Activated CD4-positive, alpha-beta memory T cell treated with anti-CD3 and anti-CD28 coated beads, Interleukin-2, amount 10 ng/mL, durations not matched to agents 7 days and 5 days (primary cell): ENCODE measurements at regions of chr10 and their contacts with region 1.

Region 1: GRCh38 chr10:101569838-101570766 is 18.0 kb downstream of the POLL start:
- DNase-seq: peak; percentile 84
- H3K4me3 Mint-ChIP-seq: peak overlapping the region; percentile 73
- H3K27ac Mint-ChIP-seq: no peak overlapping the region
- H3K4me1 Mint-ChIP-seq: peaks cover 18% of the 10 kb centered on the region
- H3K27me3 Mint-ChIP-seq: peaks cover 39% of the 10 kb centered on the region

Region 2: GRCh38 chr10:101272229-101272868 is 297.8 kb before region 1 on chr10:
- CTCF ChIA-PET with region 1: interaction called, 13 read pairs
- POLR2A ChIA-PET with region 1: no interaction called
- DNase-seq: peak; percentile 66
- H3K4me3 Mint-ChIP-seq: no peak overlapping the region
- H3K27ac Mint-ChIP-seq: no peak overlapping the region
- H3K4me1 Mint-ChIP-seq: no peaks in the 10 kb centered on the region
- H3K27me3 Mint-ChIP-seq: peaks cover 24% of the 10 kb centered on the region

Region 3: GRCh38 chr10:101525848-101526247 is 44.3 kb before region 1 on chr10:
- CTCF ChIA-PET with region 1: no interaction called
- POLR2A ChIA-PET with region 1: no interaction called
- DNase-seq: no peak
- H3K4me3 Mint-ChIP-seq: no peak overlapping the region
- H3K27ac Mint-ChIP-seq: no peak overlapping the region
- H3K4me1 Mint-ChIP-seq: no peaks in the 10 kb centered on the region
- H3K27me3 Mint-ChIP-seq: no peaks in the 10 kb centered on the region

Region 4: DNA sequence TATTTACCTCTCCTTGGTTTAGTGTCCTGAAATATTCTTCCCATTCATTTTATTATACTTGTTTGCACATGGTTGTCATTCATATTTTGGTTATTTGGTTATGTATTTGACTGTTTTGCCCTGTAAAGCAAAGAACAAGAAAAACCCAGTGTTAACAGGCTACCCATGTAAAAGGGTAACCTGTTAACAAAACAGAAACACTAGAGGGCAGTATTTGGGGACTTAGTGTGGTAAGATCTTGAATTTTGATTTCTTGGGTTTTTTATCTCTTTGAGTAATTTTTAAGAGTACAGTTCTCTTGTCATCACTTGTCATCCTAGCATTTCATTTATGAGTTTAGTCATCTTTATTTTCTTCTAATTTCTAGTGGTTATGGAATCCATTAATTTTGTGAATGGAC is 33.3 kb before region 1 on chr10:
- CTCF ChIA-PET with region 1: interaction called, 67 read pairs
- POLR2A ChIA-PET with region 1: no interaction called
- DNase-seq: no peak
- H3K4me3 Mint-ChIP-seq: no peak overlapping the region
- H3K27ac Mint-ChIP-seq: no peak overlapping the region
- H3K4me1 Mint-ChIP-seq: peaks cover 10% of the 10 kb centered on the region
- H3K27me3 Mint-ChIP-seq: no peaks in the 10 kb centered on the region

Region 5: DNA sequence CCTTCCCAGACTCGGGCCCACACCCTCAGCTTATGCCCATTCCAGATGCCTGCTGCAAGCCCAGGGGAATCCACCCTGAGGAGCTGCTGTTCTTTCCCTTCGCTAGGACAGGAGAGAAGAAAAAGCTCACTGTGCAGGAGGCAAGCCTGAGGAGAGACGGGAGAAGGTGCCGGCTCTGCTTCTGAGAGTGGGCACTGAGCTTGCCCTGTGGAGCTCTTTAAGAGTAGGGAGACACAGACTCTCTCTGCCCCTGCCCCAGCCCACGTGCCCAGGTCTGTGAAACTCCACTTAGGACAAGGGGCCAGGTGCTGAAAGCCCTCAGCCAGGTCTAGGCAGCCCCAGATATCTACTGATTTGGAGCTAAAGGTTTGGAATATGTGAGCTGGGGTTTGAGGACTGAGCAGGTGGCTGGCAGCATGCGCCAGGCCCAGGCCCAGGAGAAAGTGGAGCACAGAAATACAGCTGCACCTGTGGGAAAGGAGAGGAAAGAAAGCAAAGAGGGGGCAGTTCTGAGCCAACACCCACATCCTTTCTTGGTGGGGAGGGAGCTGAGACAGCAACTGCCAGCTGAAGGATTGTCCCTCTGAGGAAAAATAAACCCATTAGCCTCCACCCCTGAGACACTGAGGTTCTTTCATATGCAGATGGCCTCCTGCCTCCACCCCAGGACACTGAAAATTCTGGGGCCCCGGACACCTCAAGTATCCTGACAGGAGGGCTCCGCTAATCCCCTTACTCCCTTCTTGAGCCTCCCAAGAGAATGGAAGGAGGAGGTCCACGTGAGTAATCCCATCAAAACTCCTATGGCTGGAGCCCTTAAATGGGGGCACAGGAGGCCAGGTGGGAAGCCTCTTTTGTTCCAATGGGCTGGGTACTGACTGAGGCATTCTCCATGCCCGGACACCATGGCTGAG is 10.6 kb after region 1 on chr10:
- CTCF ChIA-PET with region 1: interaction called, 11 read pairs
- POLR2A ChIA-PET with region 1: interaction called, 4 read pairs
- DNase-seq: no peak
- H3K4me3 Mint-ChIP-seq: no peak overlapping the region
- H3K27ac Mint-ChIP-seq: no peak overlapping the region
- H3K4me1 Mint-ChIP-seq: peaks cover 2% of the 10 kb centered on the region
- H3K27me3 Mint-ChIP-seq: no peaks in the 10 kb centered on the region

Region 6: DNA sequence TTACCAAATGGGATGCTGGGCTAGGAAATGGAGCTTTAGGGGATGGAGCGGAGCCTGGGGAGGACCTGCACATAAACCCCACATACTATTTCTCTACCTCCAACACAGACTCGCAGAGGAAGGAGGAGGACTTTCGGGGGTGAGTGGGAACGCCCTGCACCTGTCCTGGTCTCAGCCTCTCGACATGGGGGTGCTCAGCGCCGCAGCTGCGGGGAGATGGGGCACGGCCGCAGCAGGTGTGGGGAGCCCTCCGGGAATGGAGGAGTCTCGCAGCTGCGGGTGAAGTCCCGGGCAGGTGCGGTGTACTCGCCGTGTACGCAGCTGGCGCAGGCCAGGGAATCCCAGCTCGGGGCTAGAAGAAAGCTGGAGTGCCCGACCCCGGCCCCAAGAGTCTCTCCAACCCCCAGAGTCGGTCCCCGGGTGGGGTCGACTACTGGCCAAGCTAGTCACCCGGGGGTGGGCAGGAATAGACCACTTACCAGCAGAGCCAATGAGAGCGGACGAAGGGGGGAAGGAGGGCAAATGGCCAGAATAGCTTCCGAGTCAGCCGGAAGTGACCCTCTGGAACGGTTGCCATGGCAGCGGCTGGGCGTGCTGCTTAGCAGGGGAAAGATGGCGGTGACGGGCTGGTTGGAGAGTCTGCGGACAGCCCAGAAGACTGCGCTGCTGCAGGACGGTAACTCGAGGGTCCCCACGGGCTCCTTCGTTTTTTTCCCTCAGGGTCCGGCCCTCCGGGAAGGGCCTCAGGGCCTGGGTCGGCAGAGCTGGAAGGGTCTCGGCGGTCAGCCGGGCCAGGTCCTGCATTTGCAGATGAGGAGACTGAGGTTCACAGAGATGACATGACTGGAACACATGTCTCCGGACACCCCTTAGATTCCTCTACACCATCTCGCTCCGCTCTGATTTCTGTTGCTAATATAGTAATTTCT is 17.9 kb after region 1 on chr10 and contains the starts of genes DPCD and POLL:
- CTCF ChIA-PET with region 1: interaction called, 10 read pairs
- POLR2A ChIA-PET with region 1: no interaction called
- DNase-seq: peak; percentile 93
- H3K4me3 Mint-ChIP-seq: peak within 1 kb of the TSS; percentile 90
- H3K27ac Mint-ChIP-seq: peak within 1 kb of the TSS; percentile 74
- H3K4me1 Mint-ChIP-seq: peaks cover 24% of the 10 kb centered on the region
- H3K27me3 Mint-ChIP-seq: no peaks in the 10 kb centered on the region
- total RNA-seq, gene DPCD: 4.1 to 5.2 TPM
- total RNA-seq, gene POLL: 31.9 to 35.9 TPM